ENCODE measurements at regions of chrX and their contacts with region 1.

Region 1: GRCh38 chrX:70262952-70263567 is 3.1 kb upstream of the P2RY4 start:
- DNase-seq: peak in 1 of 2 donors; percentile 74
- ATAC-seq: peak; percentile 52
- H3K4me3 ChIP-seq: no peak overlapping the region
- H3K27ac ChIP-seq: no peak overlapping the region
- H3K4me1 ChIP-seq: no peaks in the 10 kb centered on the region
- H3K27me3 ChIP-seq: no peaks in the 10 kb centered on the region

Region 2: DNA sequence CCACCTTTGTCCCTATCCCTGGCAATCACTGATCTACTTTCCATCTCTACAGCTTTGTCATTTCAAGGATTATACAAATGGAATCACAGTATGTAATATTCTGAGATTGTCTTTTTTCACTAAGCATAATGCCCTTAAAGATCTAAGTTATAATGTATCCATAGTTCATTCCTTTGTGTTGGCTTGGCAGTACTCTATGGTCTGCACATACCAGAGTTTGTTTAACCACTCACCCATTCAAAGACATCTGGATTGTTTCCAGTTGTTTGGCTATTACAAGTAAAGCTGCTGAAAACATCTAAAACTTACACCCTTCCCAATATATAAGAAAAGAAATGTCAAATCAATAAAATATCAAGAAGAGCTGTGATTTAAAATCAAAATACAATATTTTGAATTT is 54.6 kb before region 1 on chrX:
- intact Hi-C with region 1: loop called in 1 of 2 experiments (anchors 5 kb)
- DNase-seq: no peak
- ATAC-seq: no peak
- H3K4me3 ChIP-seq: no peak overlapping the region
- H3K27ac ChIP-seq: no peak overlapping the region
- H3K4me1 ChIP-seq: no peaks in the 10 kb centered on the region
- H3K27me3 ChIP-seq: no peaks in the 10 kb centered on the region

Region 3: DNA sequence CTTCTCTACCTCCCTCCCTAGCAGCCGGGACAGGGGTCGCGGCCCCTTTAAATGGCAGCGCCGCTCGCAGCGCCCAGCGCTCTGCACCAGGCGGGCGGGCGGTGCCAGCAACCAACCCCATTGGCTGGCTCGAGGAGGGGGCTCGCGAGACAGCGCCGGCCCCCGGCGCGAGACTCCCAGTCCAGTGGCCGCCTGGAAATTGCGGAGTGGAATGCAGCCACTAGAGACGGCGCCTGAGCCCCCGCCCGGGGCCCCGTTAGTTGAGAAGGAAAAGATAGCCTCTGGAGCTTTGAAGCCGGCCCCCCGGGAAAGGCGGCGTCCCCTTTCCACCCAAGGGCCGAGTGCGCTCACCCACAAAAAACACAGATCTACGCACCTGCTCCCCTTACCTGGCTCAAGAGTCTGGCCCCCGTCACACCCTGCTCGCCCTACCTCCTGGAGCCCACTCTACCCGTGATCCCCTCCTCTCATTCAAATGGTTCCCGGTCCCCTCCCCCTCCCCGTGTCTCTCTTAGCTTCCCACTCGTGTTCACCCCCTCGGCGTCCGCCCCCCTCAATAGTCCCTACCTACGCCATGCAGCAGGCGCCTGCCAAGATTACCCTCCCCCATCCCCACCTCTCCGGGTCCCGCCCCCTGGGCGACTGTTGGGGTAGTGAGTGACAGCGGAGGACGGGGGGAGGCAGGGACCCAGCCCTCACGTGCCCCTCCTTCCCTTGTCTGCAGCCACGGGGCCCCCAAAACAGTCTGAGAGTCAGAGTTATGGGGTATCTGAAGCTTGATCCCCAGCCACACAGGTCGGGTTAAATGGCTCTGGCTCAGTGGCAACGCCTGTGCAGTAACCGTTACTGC is 991.3 kb after region 1 on chrX and contains the start of gene ZMYM3:
- intact Hi-C with region 1: no loop called
- DNase-seq: peak; percentile 92 to 94
- ATAC-seq: peak; percentile 95
- H3K4me3 ChIP-seq: peak within 1 kb of the TSS; percentile 41 to 70
- H3K27ac ChIP-seq: peak within 1 kb of the TSS in 1 of 2 donors; percentile 73
- H3K4me1 ChIP-seq: no peaks in the 10 kb centered on the region
- H3K27me3 ChIP-seq: no peaks in the 10 kb centered on the region
- total RNA-seq, gene ZMYM3: 14.5 to 26.0 TPM